ENCODE measurements at regions of chr19 and their contacts with region 1.

Region 1: DNA sequence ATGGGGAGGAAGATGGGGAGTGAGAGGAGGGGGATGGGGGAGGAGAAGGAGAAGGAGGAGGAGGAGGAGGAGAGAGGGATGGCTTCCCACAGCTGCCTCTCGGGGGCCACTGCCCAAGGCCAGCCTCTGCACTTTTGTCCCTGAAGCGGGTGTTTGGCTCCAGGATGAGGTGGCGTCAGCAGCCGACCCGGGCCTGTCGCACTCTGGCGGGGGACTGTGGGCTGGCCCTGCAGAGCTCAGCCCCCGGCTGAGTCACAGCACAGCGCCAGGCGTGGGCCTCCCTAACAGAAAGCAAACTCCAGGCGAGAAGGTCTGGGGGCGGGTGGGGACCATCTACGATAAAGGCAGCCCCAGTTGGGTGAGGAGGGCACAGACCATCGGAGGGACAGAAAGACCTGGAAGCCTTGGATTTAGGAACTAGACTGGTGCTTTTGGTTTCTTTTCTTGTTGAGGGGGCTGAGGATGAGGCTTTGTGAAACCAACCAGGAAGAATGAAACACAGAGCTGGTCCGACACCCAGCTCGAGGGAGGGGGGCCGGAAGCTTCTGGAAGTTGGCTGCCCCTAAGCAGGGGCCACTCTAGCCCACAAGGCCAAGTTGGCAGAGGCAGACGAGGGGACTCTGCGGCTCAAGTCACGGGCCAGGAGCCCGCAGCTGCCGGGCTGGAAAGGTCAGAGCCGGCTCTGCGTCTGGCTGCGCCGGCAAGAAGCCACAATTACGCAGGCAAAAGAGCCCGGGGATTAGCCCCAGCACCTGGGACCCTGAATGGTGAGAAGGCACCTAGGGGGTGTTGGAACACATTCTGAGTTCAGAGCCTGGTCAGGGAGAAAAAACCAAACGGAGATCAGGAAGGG is 18.2 kb downstream of the LSM4 start:
- DNase-seq: peak; percentile 68 to 90
- ATAC-seq: peak; percentile 46 to 53
- H3K4me3 ChIP-seq: peak overlapping the region; percentile 37 to 57 (median 56)
- H3K27ac ChIP-seq: peak overlapping the region; percentile 88 to 99 (median 94)
- H3K4me1 ChIP-seq: peaks cover 50 to 64% of the 10 kb centered on the region in 2 donors
- H3K27me3 ChIP-seq: no peaks in the 10 kb centered on the region
- CTCF ChIP-seq: no peak
- POLR2A ChIP-seq: peak; percentile 73 to 84

Region 2: GRCh38 chr19:18191640-18192062 is 113.0 kb before region 1 on chr19:
- in situ Hi-C with region 1: no loop called
- intact Hi-C with region 1: no loop called
- DNase-seq: no peak
- ATAC-seq: no peak
- H3K4me3 ChIP-seq: peak overlapping the region; percentile 58 to 75 (median 66)
- H3K27ac ChIP-seq: peak overlapping the region; percentile 85 to 95 (median 94)
- H3K4me1 ChIP-seq: peaks cover 11 to 14% of the 10 kb centered on the region in 2 donors
- H3K27me3 ChIP-seq: no peaks in the 10 kb centered on the region
- CTCF ChIP-seq: peak in 1 of 5 experiments; percentile 18
- POLR2A ChIP-seq: no peak

Region 3: GRCh38 chr19:18251587-18252369 is 52.9 kb before region 1 on chr19:
- in situ Hi-C with region 1: no loop called
- intact Hi-C with region 1: no loop called
- DNase-seq: peak; percentile 15 to 66
- ATAC-seq: peak; percentile 84 to 87
- H3K4me3 ChIP-seq: no peak overlapping the region
- H3K27ac ChIP-seq: no peak overlapping the region
- H3K4me1 ChIP-seq: no peaks in the 10 kb centered on the region
- H3K27me3 ChIP-seq: no peaks in the 10 kb centered on the region
- CTCF ChIP-seq: peak; percentile 94 to 98 (median 97)
- POLR2A ChIP-seq: no peak

Region 4: DNA sequence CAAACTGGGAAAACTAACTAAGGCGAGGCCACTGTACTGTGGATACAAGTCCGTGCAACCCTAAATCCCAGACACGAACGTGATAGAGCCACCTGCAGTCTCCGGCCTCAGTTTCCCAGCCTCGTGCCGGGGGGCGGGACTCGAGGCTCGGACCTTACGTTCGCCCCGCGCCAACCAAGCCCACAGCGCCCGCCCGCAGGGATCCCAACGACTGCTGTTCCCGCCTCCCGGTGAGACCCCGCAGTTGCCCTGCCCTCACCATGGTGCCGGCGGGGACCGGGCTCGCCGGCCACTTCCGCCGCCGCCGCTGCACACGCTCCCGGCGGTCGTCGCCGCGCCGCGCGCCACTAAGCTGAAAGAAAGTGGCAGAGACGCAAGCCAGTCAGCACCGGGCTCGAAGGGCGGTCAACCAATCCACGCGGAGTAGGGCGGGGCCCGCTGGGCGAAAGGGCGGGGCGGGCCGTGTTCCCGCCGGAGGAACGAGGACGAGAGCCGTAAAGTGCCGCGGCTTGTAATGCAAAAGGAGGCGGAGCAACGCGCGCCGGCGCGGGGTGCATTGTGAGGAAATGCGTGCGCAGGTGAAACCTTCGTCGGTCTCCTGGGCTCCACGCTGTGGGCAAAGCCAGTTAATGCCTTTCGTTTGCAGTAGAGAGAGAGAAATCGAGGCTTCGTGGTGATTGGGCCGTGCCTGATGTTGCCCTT is 18.2 kb after region 1 on chr19 and contains the start of gene LSM4:
- in situ Hi-C with region 1: no loop called
- intact Hi-C with region 1: loop called (anchors 2 kb)
- DNase-seq: peak; percentile 98 to 99
- ATAC-seq: peak; percentile 94 to 97
- H3K4me3 ChIP-seq: peak within 1 kb of the TSS; percentile 81 to 88 (median 82)
- H3K27ac ChIP-seq: peak within 1 kb of the TSS; percentile 91 to 97 (median 95)
- H3K4me1 ChIP-seq: peaks cover 40 to 45% of the 10 kb centered on the region in 2 donors
- H3K27me3 ChIP-seq: no peaks in the 10 kb centered on the region
- CTCF ChIP-seq: peak in 3 of 5 experiments; percentile 20 to 31 (median 25)
- POLR2A ChIP-seq: peak; percentile 90 to 91
- total RNA-seq, gene LSM4: 122 to 294 (median 193) TPM

Region 5: GRCh38 chr19:18373892-18374629 is 69.4 kb after region 1 on chr19:
- in situ Hi-C with region 1: no loop called
- intact Hi-C with region 1: no loop called
- DNase-seq: peak; percentile 88 to 94
- ATAC-seq: peak; percentile 90 to 91
- H3K4me3 ChIP-seq: peak overlapping the region in 1 of 4 donors; percentile 10
- H3K27ac ChIP-seq: peak overlapping the region; percentile 76 to 87 (median 84)
- H3K4me1 ChIP-seq: peaks cover 7 to 8% of the 10 kb centered on the region in 2 donors
- H3K27me3 ChIP-seq: no peaks in the 10 kb centered on the region
- CTCF ChIP-seq: no peak
- POLR2A ChIP-seq: peak in 1 of 2 donors; percentile 40

Measured in gastrocnemius medialis (tissue), 4 donors.